ENCODE measurements at regions of chr7 and their contacts with region 1.

Region 1: GRCh38 chr7:47669061-47669891 is 87.4 kb upstream of the TNS3 start:
- DNase-seq: no peak
- ATAC-seq: peak; percentile 56; the same call in 1 of the 2 replicates
- H3K4me3 ChIP-seq: no peak overlapping the region
- H3K27ac ChIP-seq: peak overlapping the region; percentile 87
- H3K4me1 ChIP-seq: peaks cover 12% of the 10 kb centered on the region; the same call in 1 of the 2 replicates
- H3K27me3 ChIP-seq: no peaks in the 10 kb centered on the region
- CTCF ChIP-seq: no peak

Region 2: GRCh38 chr7:46549892-46550639 is 1119.2 kb before region 1 on chr7:
- CTCF ChIA-PET with region 1: no interaction called
- POLR2A ChIA-PET with region 1: interaction called, 10 read pairs
- in situ Hi-C with region 1: no loop called
- intact Hi-C with region 1: no loop called
- DNase-seq: no peak
- ATAC-seq: no peak
- H3K4me3 ChIP-seq: no peak overlapping the region
- H3K27ac ChIP-seq: no peak overlapping the region
- H3K4me1 ChIP-seq: peaks cover 10% of the 10 kb centered on the region; the same call in 1 of the 2 replicates
- H3K27me3 ChIP-seq: no peaks in the 10 kb centered on the region
- CTCF ChIP-seq: no peak

Region 3: GRCh38 chr7:47605816-47606575 is 63.3 kb before region 1 on chr7:
- CTCF ChIA-PET with region 1: no interaction called
- POLR2A ChIA-PET with region 1: no interaction called
- in situ Hi-C with region 1: no loop called
- intact Hi-C with region 1: loop called (anchors 2 kb)
- DNase-seq: no peak
- ATAC-seq: no peak
- H3K4me3 ChIP-seq: no peak overlapping the region
- H3K27ac ChIP-seq: peak overlapping the region; percentile 100
- H3K4me1 ChIP-seq: peaks cover 69% of the 10 kb centered on the region
- H3K27me3 ChIP-seq: no peaks in the 10 kb centered on the region
- CTCF ChIP-seq: no peak

Region 4: GRCh38 chr7:48299580-48300169 is 630.4 kb after region 1 on chr7:
- CTCF ChIA-PET with region 1: no interaction called
- POLR2A ChIA-PET with region 1: no interaction called
- in situ Hi-C with region 1: no loop called
- intact Hi-C with region 1: no loop called
- DNase-seq: peak; percentile 52
- ATAC-seq: peak; percentile 97
- H3K4me3 ChIP-seq: no peak overlapping the region
- H3K27ac ChIP-seq: no peak overlapping the region
- H3K4me1 ChIP-seq: no peaks in the 10 kb centered on the region
- H3K27me3 ChIP-seq: no peaks in the 10 kb centered on the region
- CTCF ChIP-seq: peak; percentile 94